ENCODE measurements at regions of chr15 and their contacts with region 1.

Region 1: DNA sequence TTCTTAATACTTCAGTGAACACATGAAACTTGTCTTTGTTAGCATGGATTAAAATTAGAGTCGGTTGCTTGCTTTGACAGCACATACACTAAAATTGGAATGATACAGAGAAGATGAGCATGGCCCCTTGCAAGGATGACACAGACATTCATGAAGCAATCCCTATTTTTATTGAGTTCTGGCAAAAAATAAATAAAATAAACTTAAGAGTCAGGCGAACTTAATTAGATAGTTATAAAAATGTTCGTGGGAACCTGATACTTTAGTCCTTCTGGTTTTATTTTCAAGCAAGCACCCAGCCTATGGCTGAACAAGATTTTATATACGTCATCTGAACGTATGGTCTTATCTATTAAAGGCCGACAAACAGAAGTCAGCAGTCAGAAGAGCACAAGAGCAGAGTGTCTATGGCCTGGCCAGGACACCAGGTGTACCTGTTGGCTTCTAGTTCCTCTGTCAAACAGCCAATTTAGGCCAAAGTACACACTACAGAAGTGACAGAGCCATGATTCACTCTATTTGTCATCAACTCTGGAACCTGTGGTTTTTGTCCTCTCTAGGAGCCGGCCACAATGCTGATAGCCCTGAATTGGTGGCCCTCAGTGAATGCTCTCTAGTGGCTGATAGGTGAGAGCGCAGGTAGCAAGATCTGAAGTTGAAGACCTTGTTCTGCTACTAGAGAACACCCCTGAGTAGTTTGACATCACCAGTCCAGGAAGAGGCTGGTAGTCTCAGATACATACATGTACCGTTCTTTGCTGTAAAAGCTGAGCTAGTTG is 64.3 kb downstream of the LEO1 start:
- DNase-seq: peak; percentile 85
- H3K4me3 ChIP-seq: no peak overlapping the region
- H3K27ac ChIP-seq: no peak overlapping the region
- H3K4me1 ChIP-seq: peaks cover 10% of the 10 kb centered on the region
- H3K27me3 ChIP-seq: no peaks in the 10 kb centered on the region
- CTCF ChIP-seq: peak; percentile 26 to 44

Region 2: DNA sequence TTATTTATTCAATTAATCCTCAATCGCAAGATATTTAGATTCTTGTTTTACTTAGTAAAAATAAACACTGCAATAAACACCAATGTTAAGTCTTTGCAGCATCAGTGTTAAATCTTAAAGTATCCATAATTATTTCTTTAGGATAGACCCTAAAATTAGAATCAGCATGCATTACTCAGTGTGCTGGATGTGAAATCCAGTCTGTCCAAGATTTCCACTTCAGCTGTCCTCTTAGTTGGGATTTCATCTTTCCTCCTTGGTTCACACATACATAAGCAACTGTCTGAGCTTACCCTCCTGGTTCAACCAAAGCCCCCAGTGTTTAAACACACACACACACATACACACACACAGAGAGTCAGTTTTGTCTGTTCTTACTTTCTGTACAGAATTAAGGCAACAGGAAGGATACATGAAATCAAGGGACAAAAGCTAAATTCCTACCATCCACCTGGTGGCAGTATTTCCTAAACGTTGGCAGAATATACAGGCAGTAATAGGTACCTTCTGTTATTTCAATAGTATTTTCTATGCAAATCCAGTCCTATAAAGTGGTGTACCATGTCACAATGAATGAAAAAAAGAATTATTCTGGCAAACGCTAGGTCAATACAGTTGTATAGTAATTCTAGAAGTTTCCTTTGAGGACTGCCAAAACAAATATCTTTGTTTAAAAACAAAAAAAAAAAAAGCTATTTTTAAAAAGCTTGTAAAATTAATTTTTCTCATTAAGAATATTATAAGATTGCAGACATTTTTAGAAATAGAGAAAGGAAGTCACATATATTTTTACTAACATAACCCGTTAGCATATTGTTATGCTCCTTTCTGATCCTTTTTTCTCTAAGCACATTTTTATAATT is 257.4 kb before region 1 on chr15:
- CTCF ChIA-PET with region 1: no interaction called
- dilution Hi-C with region 1: no loop called
- in situ Hi-C with region 1: no loop called
- intact Hi-C with region 1: loop called (anchors 5 kb)
- DNase-seq: peak; percentile 59
- H3K4me3 ChIP-seq: no peak overlapping the region
- H3K27ac ChIP-seq: no peak overlapping the region
- H3K4me1 ChIP-seq: peaks cover 4% of the 10 kb centered on the region
- H3K27me3 ChIP-seq: no peaks in the 10 kb centered on the region
- CTCF ChIP-seq: peak; percentile 68 to 82

Region 3: GRCh38 chr15:51782357-51782896 is 124.9 kb before region 1 on chr15:
- CTCF ChIA-PET with region 1: no interaction called
- dilution Hi-C with region 1: no loop called
- in situ Hi-C with region 1: loop called in 1 of 2 experiments (anchors 10 kb)
- intact Hi-C with region 1: loop called (anchors 1 kb)
- DNase-seq: no peak
- H3K4me3 ChIP-seq: no peak overlapping the region
- H3K27ac ChIP-seq: no peak overlapping the region
- H3K4me1 ChIP-seq: peaks cover 10% of the 10 kb centered on the region
- H3K27me3 ChIP-seq: no peaks in the 10 kb centered on the region
- CTCF ChIP-seq: peak; percentile 50 to 60

Region 4: DNA sequence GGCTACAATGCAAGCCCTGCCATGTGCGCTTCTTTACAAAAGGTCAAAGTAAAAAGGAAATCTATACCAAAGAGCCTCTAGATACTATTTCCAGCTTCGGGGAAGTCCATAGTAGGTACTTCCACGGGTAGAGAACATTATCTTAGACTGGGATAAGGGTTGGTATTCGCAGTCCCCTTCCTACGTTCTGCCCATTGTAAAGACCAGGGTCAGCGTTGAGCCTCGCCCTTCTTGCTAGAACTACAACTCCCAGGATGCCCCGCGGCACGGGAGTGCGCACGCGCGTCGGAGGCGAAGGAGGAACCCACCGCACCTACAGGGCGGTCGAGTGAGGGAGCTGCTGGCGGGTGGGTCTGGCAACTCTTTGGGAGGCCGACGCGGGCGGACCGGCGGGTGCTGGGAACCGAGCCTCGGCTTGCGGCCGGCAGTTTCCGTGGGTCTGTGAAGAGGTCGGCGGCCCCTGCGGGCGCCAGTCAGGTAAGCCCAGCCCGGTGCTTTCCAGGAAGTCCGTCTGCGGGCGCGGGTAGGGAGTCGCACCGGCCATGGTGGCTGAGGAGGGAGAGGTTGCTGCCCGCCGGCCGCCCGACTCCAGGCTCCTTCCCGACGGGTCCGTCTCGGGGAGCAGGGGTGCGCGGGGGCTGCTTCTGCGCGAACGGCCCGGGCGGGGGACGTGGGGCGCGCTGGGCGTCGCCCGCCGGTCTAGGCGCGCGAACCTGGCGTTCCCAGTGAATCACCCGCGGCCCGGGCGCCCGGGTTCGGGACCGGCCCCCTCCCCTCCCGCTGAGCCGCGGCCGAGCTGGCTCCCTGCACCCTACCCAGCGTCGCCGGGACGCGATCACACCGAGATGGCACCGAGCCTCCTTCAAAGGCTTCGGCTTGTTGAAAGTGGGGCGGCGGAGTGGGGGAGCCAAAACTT is 77.7 kb before region 1 on chr15 and contains the start of gene TMOD3:
- CTCF ChIA-PET with region 1: no interaction called
- dilution Hi-C with region 1: no loop called
- in situ Hi-C with region 1: no loop called
- intact Hi-C with region 1: loop called (anchors 2 kb)
- DNase-seq: peak; percentile 86
- H3K4me3 ChIP-seq: peak within 1 kb of the TSS; percentile 92 to 98 (median 92)
- H3K27ac ChIP-seq: peak within 1 kb of the TSS; percentile 88
- H3K4me1 ChIP-seq: peaks cover 42% of the 10 kb centered on the region
- H3K27me3 ChIP-seq: no peaks in the 10 kb centered on the region
- CTCF ChIP-seq: no peak
- total RNA-seq, gene TMOD3: 50.3 to 124 TPM

Region 5: DNA sequence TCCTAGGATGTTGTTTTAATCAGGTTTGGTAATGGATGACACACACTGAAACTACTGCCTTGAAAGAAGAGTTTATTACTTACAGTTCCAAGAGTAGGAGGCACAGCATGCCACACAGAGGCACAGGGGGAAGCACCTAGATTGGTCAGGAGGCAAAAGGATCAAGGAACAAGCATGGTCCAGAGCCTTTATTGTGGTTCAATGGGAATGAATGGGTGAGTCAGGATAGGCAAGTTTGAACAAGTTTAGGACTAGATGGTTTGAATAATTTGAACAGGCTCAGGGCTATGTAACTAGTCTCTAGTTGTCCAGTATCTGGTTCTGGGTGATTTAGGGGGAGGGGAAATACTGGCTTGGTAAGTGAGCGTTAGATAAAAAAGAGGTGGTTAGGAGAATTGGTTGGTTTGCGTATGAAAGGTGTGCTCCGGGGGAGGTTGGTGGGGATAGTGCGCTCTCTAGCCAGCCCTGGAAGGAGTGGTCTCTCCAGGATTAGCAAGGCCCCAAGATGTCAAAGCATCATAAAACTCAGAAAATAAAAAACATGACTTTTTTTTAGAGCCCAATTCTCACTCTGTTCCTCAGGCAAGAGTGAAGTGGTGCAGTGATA is 42.8 kb before region 1 on chr15:
- CTCF ChIA-PET with region 1: no interaction called
- dilution Hi-C with region 1: no loop called
- in situ Hi-C with region 1: no loop called
- intact Hi-C with region 1: loop called (anchors 1 kb)
- DNase-seq: peak; percentile 100
- H3K4me3 ChIP-seq: no peak overlapping the region
- H3K27ac ChIP-seq: peak overlapping the region; percentile 94
- H3K4me1 ChIP-seq: peaks cover 55% of the 10 kb centered on the region
- H3K27me3 ChIP-seq: no peaks in the 10 kb centered on the region
- CTCF ChIP-seq: no peak

Region 6: DNA sequence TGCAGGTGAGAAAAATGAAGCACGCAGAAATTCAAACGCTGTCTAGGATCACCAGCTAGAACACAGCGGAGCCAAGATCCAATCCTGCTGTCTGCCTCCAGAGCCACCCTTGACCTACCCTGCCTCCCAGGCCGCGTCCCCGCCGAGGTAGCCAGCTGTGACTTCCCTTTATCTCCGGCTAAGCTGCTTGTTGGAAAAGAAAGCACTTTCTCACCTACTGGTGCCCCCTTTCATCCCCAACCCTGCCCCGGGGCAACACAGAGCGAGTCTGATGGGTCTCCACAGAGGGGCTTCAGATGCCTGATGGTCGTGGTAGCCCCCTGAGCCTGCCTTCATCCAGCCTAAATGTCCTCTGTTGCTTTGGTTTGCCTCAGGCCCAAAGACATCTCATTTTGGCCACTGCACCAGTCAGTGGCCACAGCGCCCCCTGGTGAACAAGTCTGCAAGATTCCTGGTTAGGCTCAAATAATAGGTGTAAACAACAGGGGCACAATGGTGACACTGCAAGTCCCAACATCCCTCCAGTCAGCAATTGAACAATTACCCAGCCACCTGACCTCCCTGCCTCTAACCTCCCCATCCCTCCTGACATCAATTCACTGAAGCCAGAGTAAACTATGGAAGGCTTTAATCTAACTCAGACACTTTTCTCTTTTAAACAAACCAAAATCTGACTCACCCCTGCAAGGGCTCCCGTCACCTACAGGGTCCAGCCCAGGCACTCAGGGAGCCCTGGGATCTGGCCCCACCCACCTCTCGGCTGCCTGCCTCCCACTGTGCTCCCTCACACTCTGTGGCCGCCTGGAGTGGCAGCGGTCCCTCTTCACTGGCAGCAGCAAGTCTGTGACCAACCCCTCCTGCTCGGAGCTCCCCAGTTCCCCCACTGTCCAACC is 232.5 kb after region 1 on chr15:
- CTCF ChIA-PET with region 1: no interaction called
- dilution Hi-C with region 1: no loop called
- in situ Hi-C with region 1: no loop called
- intact Hi-C with region 1: no loop called
- DNase-seq: peak; percentile 50
- H3K4me3 ChIP-seq: no peak overlapping the region
- H3K27ac ChIP-seq: no peak overlapping the region
- H3K4me1 ChIP-seq: peaks cover 4% of the 10 kb centered on the region
- H3K27me3 ChIP-seq: no peaks in the 10 kb centered on the region
- CTCF ChIP-seq: peak; percentile 90 to 93

Region 7: GRCh38 chr15:52379395-52380106 is 472.2 kb after region 1 on chr15:
- CTCF ChIA-PET with region 1: no interaction called
- dilution Hi-C with region 1: no loop called
- in situ Hi-C with region 1: no loop called
- intact Hi-C with region 1: no loop called
- DNase-seq: no peak
- H3K4me3 ChIP-seq: no peak overlapping the region
- H3K27ac ChIP-seq: no peak overlapping the region
- H3K4me1 ChIP-seq: no peaks in the 10 kb centered on the region
- H3K27me3 ChIP-seq: no peaks in the 10 kb centered on the region
- CTCF ChIP-seq: no peak

Measured in mammary epithelial cell (primary cell).